Activated T-helper 1 cell treated with anti-CD3 and anti-CD28 coated beads, Interleukin-12 subunit alpha, Interleukin-12 subunit beta, Interleukin-2, Interleukin-4 antibody, amounts not matched to agents 30 ng/mL and 10 ng/mL and 1 ng/mL, durations not matched to agents 14 hours and 24 hours and 36 hours (primary cell): ENCODE measurements at regions of chr12 and their contacts with region 1.

Region 1: GRCh38 chr12:106919910-106920544 is 35.7 kb upstream of the TMEM263 start:
- DNase-seq: no peak
- H3K4me3 Mint-ChIP-seq: no peak overlapping the region
- H3K27ac Mint-ChIP-seq: no peak overlapping the region
- H3K4me1 Mint-ChIP-seq: peaks cover 9% of the 10 kb centered on the region
- H3K27me3 Mint-ChIP-seq: peaks cover 11% of the 10 kb centered on the region

Region 2: GRCh38 chr12:106223485-106224354 is 696.3 kb before region 1 on chr12:
- intact Hi-C with region 1: loop called (anchors 5 kb)
- DNase-seq: peak; percentile 59
- H3K4me3 Mint-ChIP-seq: no peak overlapping the region
- H3K27ac Mint-ChIP-seq: no peak overlapping the region
- H3K4me1 Mint-ChIP-seq: peaks cover 29% of the 10 kb centered on the region
- H3K27me3 Mint-ChIP-seq: peaks cover 3% of the 10 kb centered on the region

Region 3: GRCh38 chr12:106581543-106582248 is 338.3 kb before region 1 on chr12:
- intact Hi-C with region 1: loop called (anchors 5 kb)
- DNase-seq: no peak
- H3K4me3 Mint-ChIP-seq: no peak overlapping the region
- H3K27ac Mint-ChIP-seq: peak overlapping the region; percentile 11
- H3K4me1 Mint-ChIP-seq: peaks cover 8% of the 10 kb centered on the region
- H3K27me3 Mint-ChIP-seq: peaks cover 67% of the 10 kb centered on the region

Region 4: GRCh38 chr12:106682592-106683234 is 237.3 kb before region 1 on chr12:
- intact Hi-C with region 1: loop called (anchors 2 kb)
- DNase-seq: no peak
- H3K4me3 Mint-ChIP-seq: no peak overlapping the region
- H3K27ac Mint-ChIP-seq: no peak overlapping the region
- H3K4me1 Mint-ChIP-seq: no peaks in the 10 kb centered on the region
- H3K27me3 Mint-ChIP-seq: no peaks in the 10 kb centered on the region

Region 5: GRCh38 chr12:106841510-106842302 is 78.3 kb before region 1 on chr12:
- intact Hi-C with region 1: loop called (anchors 5 kb)
- DNase-seq: no peak
- H3K4me3 Mint-ChIP-seq: no peak overlapping the region
- H3K27ac Mint-ChIP-seq: no peak overlapping the region
- H3K4me1 Mint-ChIP-seq: peaks cover 12% of the 10 kb centered on the region
- H3K27me3 Mint-ChIP-seq: no peaks in the 10 kb centered on the region

Region 6: GRCh38 chr12:106941481-106942156 is 21.6 kb after region 1 on chr12:
- intact Hi-C with region 1: no loop called
- DNase-seq: no peak
- H3K4me3 Mint-ChIP-seq: no peak overlapping the region
- H3K27ac Mint-ChIP-seq: no peak overlapping the region
- H3K4me1 Mint-ChIP-seq: no peaks in the 10 kb centered on the region
- H3K27me3 Mint-ChIP-seq: peaks cover 15% of the 10 kb centered on the region